ENCODE measurements at regions of chr13 and their contacts with region 1.

Region 1: GRCh38 chr13:39016787-39017186 is 21.1 kb downstream of the PROSER1 start:
- DNase-seq: peak; percentile 16
- ATAC-seq: peak; percentile 73
- H3K4me3 ChIP-seq: no peak overlapping the region
- H3K27ac ChIP-seq: no peak overlapping the region
- H3K4me1 ChIP-seq: no peaks in the 10 kb centered on the region
- H3K27me3 ChIP-seq: no peaks in the 10 kb centered on the region
- CTCF ChIP-seq: peak in 2 of 3 experiments; percentile 58 to 70; a peak in 4 of 6 replicates
- POLR2A ChIP-seq: no peak
- RAD21 ChIP-seq: peak; percentile 38

Region 2: GRCh38 chr13:38872693-38873092 is 144.1 kb before region 1 on chr13:
- CTCF ChIA-PET with region 1: no interaction called
- POLR2A ChIA-PET with region 1: no interaction called
- RAD21 ChIA-PET with region 1: no interaction called
- intact Hi-C with region 1: loop called (anchors 5 kb)
- DNase-seq: peak; percentile 42
- ATAC-seq: peak; percentile 65
- H3K4me3 ChIP-seq: no peak overlapping the region
- H3K27ac ChIP-seq: no peak overlapping the region
- H3K4me1 ChIP-seq: no peaks in the 10 kb centered on the region
- H3K27me3 ChIP-seq: no peaks in the 10 kb centered on the region; the same call in none of the 2 replicates
- CTCF ChIP-seq: peak; percentile 38 to 66 (median 63); a peak in 5 of 6 replicates
- POLR2A ChIP-seq: no peak
- RAD21 ChIP-seq: peak; percentile 37